WTC11 (cell line): ENCODE measurements at regions of chr4 and their contacts with region 1.

Region 1: GRCh38 chr4:168907119-168907698 is 102.8 kb downstream of the CBR4 start:
- DNase-seq: no peak
- ATAC-seq: no peak
- H3K4me3 Mint-ChIP-seq: no peak overlapping the region
- H3K27ac Mint-ChIP-seq: no peak overlapping the region
- H3K4me1 Mint-ChIP-seq: no peaks in the 10 kb centered on the region
- H3K27me3 Mint-ChIP-seq: no peaks in the 10 kb centered on the region
- CTCF ChIP-seq: no peak

Region 2: GRCh38 chr4:168870004-168870403 is 37.2 kb before region 1 on chr4:
- CTCF ChIA-PET with region 1: interaction called, 11 read pairs
- POLR2A ChIA-PET with region 1: no interaction called
- DNase-seq: no peak
- ATAC-seq: no peak
- H3K4me3 Mint-ChIP-seq: no peak overlapping the region
- H3K27ac Mint-ChIP-seq: no peak overlapping the region
- H3K4me1 Mint-ChIP-seq: peaks cover 14% of the 10 kb centered on the region
- H3K27me3 Mint-ChIP-seq: no peaks in the 10 kb centered on the region
- CTCF ChIP-seq: no peak

Region 3: GRCh38 chr4:168931182-168931650 is 24.0 kb after region 1 on chr4:
- CTCF ChIA-PET with region 1: no interaction called
- POLR2A ChIA-PET with region 1: no interaction called
- DNase-seq: no peak
- ATAC-seq: no peak
- H3K4me3 Mint-ChIP-seq: no peak overlapping the region
- H3K27ac Mint-ChIP-seq: no peak overlapping the region
- H3K4me1 Mint-ChIP-seq: no peaks in the 10 kb centered on the region
- H3K27me3 Mint-ChIP-seq: no peaks in the 10 kb centered on the region
- CTCF ChIP-seq: no peak

Region 4: GRCh38 chr4:168995537-168996295 is 88.5 kb after region 1 on chr4:
- CTCF ChIA-PET with region 1: no interaction called
- POLR2A ChIA-PET with region 1: no interaction called
- DNase-seq: no peak
- ATAC-seq: no peak
- H3K4me3 Mint-ChIP-seq: no peak overlapping the region
- H3K27ac Mint-ChIP-seq: no peak overlapping the region
- H3K4me1 Mint-ChIP-seq: no peaks in the 10 kb centered on the region
- H3K27me3 Mint-ChIP-seq: no peaks in the 10 kb centered on the region
- CTCF ChIP-seq: no peak